ENCODE measurements at regions of chr19 and their contacts with region 1.

Region 1: GRCh38 chr19:16659831-16660708 is at the start of gene SMIM7:
- DNase-seq: peak; percentile 95 to 100 (median 99)
- ATAC-seq: peak; percentile 98
- H3K4me3 ChIP-seq: peak within 1 kb of the TSS; percentile 74
- H3K4me3 Mint-ChIP-seq: peak within 1 kb of the TSS; percentile 88 to 100 (median 98)
- H3K27ac ChIP-seq: peak within 1 kb of the TSS; percentile 91
- H3K27ac Mint-ChIP-seq: peak within 1 kb of the TSS; percentile 96 to 99 (median 98)
- H3K4me1 ChIP-seq: peaks cover 19 to 30% of the 10 kb centered on the region in 2 donors
- H3K4me1 Mint-ChIP-seq: peaks cover 22 to 55% (median 41%) of the 10 kb centered on the region in 7 donors
- H3K27me3 ChIP-seq: no peaks in the 10 kb centered on the region
- H3K27me3 Mint-ChIP-seq: peaks cover 0 to 24% (median 0%) of the 10 kb centered on the region in 5 donors
- total RNA-seq, gene SMIM7: 56.9 to 108 (median 78.5) TPM

Region 2: GRCh38 chr19:16470911-16471811 is 188.9 kb before region 1 on chr19:
- CTCF ChIA-PET with region 1: no interaction called
- POLR2A ChIA-PET with region 1: no interaction called
- intact Hi-C with region 1: loop called (anchors 1 kb)
- DNase-seq: peak in 5 of 9 donors; percentile 14 to 40 (median 18)
- ATAC-seq: peak; percentile 2
- H3K4me3 ChIP-seq: peak overlapping the region; percentile 96
- H3K4me3 Mint-ChIP-seq: peak overlapping the region; percentile 84 to 93 (median 88)
- H3K27ac ChIP-seq: peak overlapping the region; percentile 96
- H3K27ac Mint-ChIP-seq: peak overlapping the region; percentile 18 to 87 (median 79)
- H3K4me1 ChIP-seq: peaks cover 5 to 15% of the 10 kb centered on the region in 2 donors
- H3K4me1 Mint-ChIP-seq: peaks cover 30 to 47% (median 41%) of the 10 kb centered on the region in 7 donors
- H3K27me3 ChIP-seq: no peaks in the 10 kb centered on the region
- H3K27me3 Mint-ChIP-seq: peaks cover 0 to 2% (median 0%) of the 10 kb centered on the region in 5 donors

Region 3: GRCh38 chr19:16566161-16566560 is 93.9 kb before region 1 on chr19:
- CTCF ChIA-PET with region 1: no interaction called
- POLR2A ChIA-PET with region 1: interaction called, 4 read pairs
- intact Hi-C with region 1: loop called in 1 of 2 experiments (anchors 1 kb)
- DNase-seq: peak in 8 of 9 donors; percentile 46 to 95 (median 92)
- ATAC-seq: peak; percentile 100
- H3K4me3 ChIP-seq: peak overlapping the region; percentile 17
- H3K4me3 Mint-ChIP-seq: peak overlapping the region; percentile 76 to 97 (median 82)
- H3K27ac ChIP-seq: peak overlapping the region; percentile 81
- H3K27ac Mint-ChIP-seq: peak overlapping the region; percentile 92 to 100 (median 98)
- H3K4me1 ChIP-seq: peaks cover 22 to 24% of the 10 kb centered on the region in 2 donors
- H3K4me1 Mint-ChIP-seq: peaks cover 14 to 63% (median 30%) of the 10 kb centered on the region in 7 donors
- H3K27me3 ChIP-seq: no peaks in the 10 kb centered on the region
- H3K27me3 Mint-ChIP-seq: no peaks in the 10 kb centered on the region

Region 4: DNA sequence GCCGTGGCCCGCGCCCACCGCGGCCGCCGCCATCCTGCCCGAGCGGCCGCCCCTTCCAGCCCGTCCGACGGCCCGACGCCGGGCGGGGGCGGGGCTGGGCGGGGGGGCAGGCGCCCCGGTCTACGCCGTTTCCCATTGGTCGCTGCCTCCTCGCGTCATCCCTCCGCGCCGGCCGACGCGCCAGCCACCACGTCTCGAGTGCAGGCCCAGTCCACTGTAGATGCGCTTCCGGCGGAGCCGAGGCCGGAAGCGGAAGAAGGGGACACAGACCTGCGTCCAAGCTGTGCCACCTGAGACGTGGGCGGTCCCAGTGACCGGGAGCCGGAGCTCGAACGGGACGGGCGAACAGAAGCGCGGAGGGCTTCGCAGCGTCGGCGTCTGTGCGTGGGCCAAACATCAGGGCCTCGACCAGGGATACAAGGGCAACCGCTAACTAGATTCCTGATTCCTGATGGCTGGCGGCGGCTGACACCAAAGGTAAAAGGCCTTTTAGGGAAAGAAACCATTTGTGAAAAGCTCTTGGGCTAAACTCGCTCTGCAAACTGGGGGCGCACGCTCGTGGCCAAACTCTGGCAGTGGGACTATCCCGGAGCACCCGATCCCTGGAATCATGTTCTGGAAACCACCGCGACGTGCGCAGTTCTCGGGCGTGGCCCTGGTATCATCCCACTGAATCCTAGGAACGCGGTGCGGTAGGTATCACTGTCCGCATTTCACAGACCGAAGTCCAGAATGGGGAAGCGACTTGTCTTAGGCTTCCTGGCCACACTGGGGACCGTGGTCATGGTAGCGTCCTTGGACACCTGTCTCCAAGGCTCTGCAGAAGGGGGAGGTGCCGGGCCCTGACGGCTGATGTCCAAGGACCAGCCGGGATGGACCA is 87.5 kb before region 1 on chr19 and contains the start of gene SLC35E1:
- CTCF ChIA-PET with region 1: no interaction called
- POLR2A ChIA-PET with region 1: interaction called, 8 read pairs
- intact Hi-C with region 1: loop called (anchors 1 kb)
- DNase-seq: peak; percentile 80 to 92 (median 89)
- ATAC-seq: peak; percentile 98
- H3K4me3 ChIP-seq: peak within 1 kb of the TSS; percentile 97
- H3K4me3 Mint-ChIP-seq: peak within 1 kb of the TSS; percentile 97 to 100 (median 99)
- H3K27ac ChIP-seq: peak within 1 kb of the TSS; percentile 95
- H3K27ac Mint-ChIP-seq: peak within 1 kb of the TSS; percentile 94 to 100 (median 99)
- H3K4me1 ChIP-seq: peaks cover 28 to 30% of the 10 kb centered on the region in 2 donors
- H3K4me1 Mint-ChIP-seq: peaks cover 35 to 74% (median 47%) of the 10 kb centered on the region in 7 donors
- H3K27me3 ChIP-seq: no peaks in the 10 kb centered on the region
- H3K27me3 Mint-ChIP-seq: peaks cover 0 to 2% (median 0%) of the 10 kb centered on the region in 5 donors
- total RNA-seq, gene SLC35E1: 33.0 to 67.3 (median 58.7) TPM

Region 5: GRCh38 chr19:16584248-16585141 is 75.6 kb before region 1 on chr19:
- CTCF ChIA-PET with region 1: no interaction called
- POLR2A ChIA-PET with region 1: interaction called, 6 read pairs
- intact Hi-C with region 1: loop called (anchors 1 kb)
- DNase-seq: peak; percentile 68 to 93 (median 86)
- ATAC-seq: peak; percentile 89
- H3K4me3 ChIP-seq: peak overlapping the region; percentile 26
- H3K4me3 Mint-ChIP-seq: peak overlapping the region; percentile 70 to 90 (median 78)
- H3K27ac ChIP-seq: peak overlapping the region; percentile 62
- H3K27ac Mint-ChIP-seq: peak overlapping the region; percentile 82 to 95 (median 90)
- H3K4me1 ChIP-seq: peaks cover 65% of the 10 kb centered on the region in 2 donors
- H3K4me1 Mint-ChIP-seq: peaks cover 49 to 90% (median 77%) of the 10 kb centered on the region in 7 donors
- H3K27me3 ChIP-seq: no peaks in the 10 kb centered on the region
- H3K27me3 Mint-ChIP-seq: no peaks in the 10 kb centered on the region

Region 6: GRCh38 chr19:16860118-16860517 is 200.0 kb after region 1 on chr19:
- CTCF ChIA-PET with region 1: no interaction called
- POLR2A ChIA-PET with region 1: no interaction called
- intact Hi-C with region 1: no loop called
- DNase-seq: no peak
- ATAC-seq: no peak
- H3K4me3 ChIP-seq: no peak overlapping the region
- H3K4me3 Mint-ChIP-seq: no peak overlapping the region
- H3K27ac ChIP-seq: no peak overlapping the region
- H3K27ac Mint-ChIP-seq: peak overlapping the region in 1 of 9 donors; percentile 79
- H3K4me1 ChIP-seq: no peaks in the 10 kb centered on the region
- H3K4me1 Mint-ChIP-seq: peaks cover 0 to 6% (median 0%) of the 10 kb centered on the region in 7 donors
- H3K27me3 ChIP-seq: no peaks in the 10 kb centered on the region
- H3K27me3 Mint-ChIP-seq: no peaks in the 10 kb centered on the region

Region 7: DNA sequence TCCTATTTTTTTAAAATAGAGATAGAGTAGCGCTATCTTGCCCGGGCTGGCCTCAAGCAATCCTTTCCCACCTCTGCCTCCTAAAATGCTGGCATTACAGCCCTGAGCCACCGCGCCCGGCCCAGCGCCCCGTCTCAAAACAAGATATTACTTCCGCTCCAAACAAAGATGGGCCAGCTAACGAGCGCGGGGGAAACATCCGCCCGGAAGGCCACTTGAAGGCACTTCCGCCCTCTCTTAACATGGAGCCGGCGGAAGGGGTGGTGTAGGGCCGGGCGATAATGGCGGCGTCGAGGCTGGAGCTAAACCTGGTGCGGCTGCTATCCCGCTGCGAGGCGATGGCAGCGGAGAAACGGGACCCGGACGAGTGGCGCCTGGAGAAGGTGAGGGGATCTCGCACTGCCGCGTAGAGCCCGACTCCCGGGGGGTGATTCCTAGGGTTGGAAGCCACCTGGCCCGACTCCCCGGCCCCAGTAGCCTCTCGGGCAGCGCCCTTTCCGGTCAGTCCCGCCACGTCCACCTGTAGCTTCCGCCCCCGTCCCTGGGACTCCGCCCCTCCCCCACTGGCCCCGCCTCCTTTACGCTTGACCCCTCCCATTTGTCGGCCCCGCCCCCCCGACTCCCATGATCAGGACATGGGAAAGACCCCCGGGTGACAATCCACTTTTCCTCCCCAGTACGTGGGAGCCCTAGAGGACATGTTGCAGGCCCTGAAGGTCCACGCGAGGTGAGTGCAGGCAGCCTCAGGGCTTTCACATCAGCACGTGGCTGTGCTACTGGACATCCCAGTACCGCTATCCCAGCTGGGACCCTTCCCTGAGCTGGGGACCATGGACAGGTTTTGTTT is 555.3 kb after region 1 on chr19 and contains the start of gene USE1:
- CTCF ChIA-PET with region 1: no interaction called
- POLR2A ChIA-PET with region 1: no interaction called
- intact Hi-C with region 1: no loop called
- DNase-seq: peak; percentile 70 to 91 (median 89)
- ATAC-seq: peak; percentile 97
- H3K4me3 ChIP-seq: peak within 1 kb of the TSS; percentile 92
- H3K4me3 Mint-ChIP-seq: peak within 1 kb of the TSS; percentile 83 to 99 (median 90)
- H3K27ac ChIP-seq: peak within 1 kb of the TSS; percentile 89
- H3K27ac Mint-ChIP-seq: peak within 1 kb of the TSS; percentile 97 to 100 (median 99)
- H3K4me1 ChIP-seq: peaks cover 13 to 16% of the 10 kb centered on the region in 2 donors
- H3K4me1 Mint-ChIP-seq: peaks cover 0 to 16% (median 12%) of the 10 kb centered on the region in 7 donors
- H3K27me3 ChIP-seq: no peaks in the 10 kb centered on the region
- H3K27me3 Mint-ChIP-seq: no peaks in the 10 kb centered on the region
- total RNA-seq, gene USE1: 24.7 to 51.1 (median 30.5) TPM